GM12878 (cell line): ENCODE measurements at regions of chr14 and their contacts with region 1.

Region 1: DNA sequence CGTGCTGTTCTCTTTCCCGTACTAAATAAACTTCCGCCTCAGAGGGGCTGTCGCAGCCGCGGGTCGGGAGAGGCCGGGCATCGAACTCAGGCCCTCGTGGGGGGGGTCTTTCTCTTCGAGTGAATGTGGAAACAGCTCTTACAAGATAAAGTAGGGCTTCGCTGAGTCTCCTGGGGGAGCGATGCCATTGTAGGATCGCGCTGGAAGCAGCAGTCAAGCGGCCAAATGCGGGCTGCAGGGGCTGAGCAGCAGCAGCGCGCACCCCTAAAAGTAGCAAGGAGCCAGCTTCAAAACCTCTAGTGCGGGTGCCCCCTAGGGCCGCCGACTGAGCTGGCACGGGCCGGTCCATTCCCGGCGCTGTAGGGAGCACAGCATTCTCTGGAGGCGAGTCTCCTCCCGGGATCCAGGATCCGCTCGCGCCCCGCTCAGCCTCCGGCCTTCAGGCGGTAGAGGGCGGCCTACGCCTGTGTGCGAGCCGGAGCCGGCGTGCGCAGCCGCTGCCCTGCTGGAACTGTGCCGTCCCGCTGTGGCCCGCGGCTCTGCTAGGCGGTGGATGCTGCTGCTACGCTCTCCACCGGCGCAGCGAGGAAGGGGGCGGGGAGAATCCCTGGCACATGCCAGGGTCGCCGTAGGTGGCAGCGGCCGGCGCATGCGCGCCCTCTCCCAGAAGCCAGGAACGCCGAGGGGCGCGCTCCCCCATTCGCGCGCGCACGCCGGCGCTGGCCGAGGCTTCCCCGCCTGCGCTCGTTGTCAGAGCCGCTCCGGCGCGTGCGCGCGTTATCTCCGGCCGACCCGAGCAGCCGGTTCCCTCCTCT is at the start of gene FUT8:
- DNase-seq: peak; percentile 80
- ATAC-seq: peak; percentile 89
- H3K4me3 ChIP-seq: peak within 1 kb of the TSS; percentile 97
- H3K27ac ChIP-seq: peak within 1 kb of the TSS; percentile 88
- H3K4me1 ChIP-seq: no peaks in the 10 kb centered on the region
- H3K27me3 ChIP-seq: no peaks in the 10 kb centered on the region
- CTCF ChIP-seq: peak; percentile 51 to 67 (median 61)
- EP300 ChIP-seq: no peak
- POLR2A ChIP-seq: peak; percentile 90
- RAD21 ChIP-seq: peak; percentile 54
- polyA plus RNA-seq, gene FUT8: 25.0 to 45.6 TPM

Region 2: GRCh38 chr14:65164068-65164824 is 248.0 kb before region 1 on chr14:
- CTCF ChIA-PET with region 1: interaction called, 125 read pairs
- POLR2A ChIA-PET with region 1: interaction called, 4 read pairs
- RAD21 ChIA-PET with region 1: interaction called, 42 read pairs
- SMC1A ChIA-PET with region 1: interaction called, 46 read pairs
- in situ Hi-C with region 1: loop called (anchors 5 kb)
- intact Hi-C with region 1: loop called (anchors 1 kb)
- DNase-seq: no peak
- ATAC-seq: peak; percentile 56
- H3K4me3 ChIP-seq: no peak overlapping the region
- H3K27ac ChIP-seq: no peak overlapping the region
- H3K4me1 ChIP-seq: peaks cover 29% of the 10 kb centered on the region
- H3K27me3 ChIP-seq: no peaks in the 10 kb centered on the region
- CTCF ChIP-seq: peak; percentile 51 to 77 (median 62); a peak in 5 of 6 replicates
- EP300 ChIP-seq: no peak
- POLR2A ChIP-seq: no peak
- RAD21 ChIP-seq: peak; percentile 96

Region 3: GRCh38 chr14:65267856-65268255 is 144.4 kb before region 1 on chr14:
- CTCF ChIA-PET with region 1: no interaction called
- POLR2A ChIA-PET with region 1: no interaction called
- RAD21 ChIA-PET with region 1: no interaction called
- SMC1A ChIA-PET with region 1: no interaction called
- in situ Hi-C with region 1: no loop called
- intact Hi-C with region 1: no loop called
- DNase-seq: no peak
- ATAC-seq: no peak
- H3K4me3 ChIP-seq: no peak overlapping the region
- H3K27ac ChIP-seq: no peak overlapping the region
- H3K4me1 ChIP-seq: no peaks in the 10 kb centered on the region
- H3K27me3 ChIP-seq: no peaks in the 10 kb centered on the region
- CTCF ChIP-seq: no peak
- EP300 ChIP-seq: no peak
- POLR2A ChIP-seq: no peak
- RAD21 ChIP-seq: no peak

Region 4: GRCh38 chr14:65287264-65288131 is 124.7 kb before region 1 on chr14:
- CTCF ChIA-PET with region 1: interaction called, 199 read pairs
- POLR2A ChIA-PET with region 1: interaction called, 12 read pairs
- RAD21 ChIA-PET with region 1: interaction called, 209 read pairs
- SMC1A ChIA-PET with region 1: interaction called, 102 read pairs
- in situ Hi-C with region 1: no loop called
- intact Hi-C with region 1: loop called (anchors 1 kb)
- DNase-seq: no peak
- ATAC-seq: peak; percentile 77
- H3K4me3 ChIP-seq: peak overlapping the region; percentile 53
- H3K27ac ChIP-seq: peak overlapping the region; percentile 98
- H3K4me1 ChIP-seq: peaks cover 77% of the 10 kb centered on the region
- H3K27me3 ChIP-seq: no peaks in the 10 kb centered on the region
- CTCF ChIP-seq: peak in 2 of 3 experiments; percentile 2 to 6; a peak in 1 of 6 replicates
- EP300 ChIP-seq: peak; percentile 51 to 55; a peak in 2 of 4 replicates
- POLR2A ChIP-seq: peak; percentile 75
- RAD21 ChIP-seq: no peak; the same call in 1 of the 2 replicates

Region 5: GRCh38 chr14:65428691-65429090 is 16.5 kb after region 1 on chr14:
- CTCF ChIA-PET with region 1: interaction called, 27 read pairs
- POLR2A ChIA-PET with region 1: interaction called, 6 read pairs
- RAD21 ChIA-PET with region 1: interaction called, 22 read pairs
- SMC1A ChIA-PET with region 1: interaction called, 25 read pairs
- in situ Hi-C with region 1: no loop called
- intact Hi-C with region 1: no loop called
- DNase-seq: no peak
- ATAC-seq: no peak
- H3K4me3 ChIP-seq: no peak overlapping the region
- H3K27ac ChIP-seq: no peak overlapping the region
- H3K4me1 ChIP-seq: peaks cover 16% of the 10 kb centered on the region
- H3K27me3 ChIP-seq: no peaks in the 10 kb centered on the region
- CTCF ChIP-seq: no peak
- EP300 ChIP-seq: no peak
- POLR2A ChIP-seq: no peak
- RAD21 ChIP-seq: no peak

Region 6: GRCh38 chr14:65502676-65503124 is 90.5 kb after region 1 on chr14:
- CTCF ChIA-PET with region 1: interaction called, 106 read pairs
- POLR2A ChIA-PET with region 1: interaction called, 9 read pairs
- RAD21 ChIA-PET with region 1: interaction called, 82 read pairs
- SMC1A ChIA-PET with region 1: interaction called, 85 read pairs
- in situ Hi-C with region 1: no loop called
- intact Hi-C with region 1: loop called (anchors 2 kb)
- DNase-seq: peak; percentile 62
- ATAC-seq: peak; percentile 79
- H3K4me3 ChIP-seq: no peak overlapping the region
- H3K27ac ChIP-seq: peak overlapping the region; percentile 65
- H3K4me1 ChIP-seq: peaks cover 21% of the 10 kb centered on the region; the same call in 1 of the 2 replicates
- H3K27me3 ChIP-seq: no peaks in the 10 kb centered on the region
- CTCF ChIP-seq: no peak
- EP300 ChIP-seq: peak; percentile 25 to 45; a peak in 1 of 4 replicates
- POLR2A ChIP-seq: no peak
- RAD21 ChIP-seq: no peak

Region 7: DNA sequence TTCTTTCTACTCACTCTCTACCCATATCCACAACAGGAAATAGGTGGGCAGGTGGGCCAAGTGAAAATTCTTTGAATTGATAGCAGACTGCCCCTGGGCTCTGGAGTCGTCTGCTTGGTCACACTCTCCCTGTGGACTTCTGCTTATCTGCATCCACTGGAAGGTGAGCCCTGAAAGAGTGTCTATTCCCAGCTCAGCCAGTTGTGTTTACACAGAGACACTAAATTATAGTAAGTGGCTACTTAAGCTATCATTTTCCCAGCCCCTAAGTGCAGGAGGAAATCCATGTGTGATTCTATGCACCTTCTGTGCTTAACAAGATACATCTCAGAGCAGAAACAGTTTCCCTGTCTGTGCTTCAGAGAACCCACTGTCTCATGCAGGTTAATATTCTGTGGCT is 338.7 kb after region 1 on chr14:
- CTCF ChIA-PET with region 1: interaction called, 10 read pairs
- POLR2A ChIA-PET with region 1: no interaction called
- RAD21 ChIA-PET with region 1: no interaction called
- SMC1A ChIA-PET with region 1: interaction called, 5 read pairs
- in situ Hi-C with region 1: no loop called
- intact Hi-C with region 1: no loop called
- DNase-seq: no peak
- ATAC-seq: no peak
- H3K4me3 ChIP-seq: no peak overlapping the region
- H3K27ac ChIP-seq: no peak overlapping the region
- H3K4me1 ChIP-seq: no peaks in the 10 kb centered on the region
- H3K27me3 ChIP-seq: no peaks in the 10 kb centered on the region
- CTCF ChIP-seq: no peak
- EP300 ChIP-seq: no peak
- POLR2A ChIP-seq: no peak
- RAD21 ChIP-seq: no peak

Region 8: DNA sequence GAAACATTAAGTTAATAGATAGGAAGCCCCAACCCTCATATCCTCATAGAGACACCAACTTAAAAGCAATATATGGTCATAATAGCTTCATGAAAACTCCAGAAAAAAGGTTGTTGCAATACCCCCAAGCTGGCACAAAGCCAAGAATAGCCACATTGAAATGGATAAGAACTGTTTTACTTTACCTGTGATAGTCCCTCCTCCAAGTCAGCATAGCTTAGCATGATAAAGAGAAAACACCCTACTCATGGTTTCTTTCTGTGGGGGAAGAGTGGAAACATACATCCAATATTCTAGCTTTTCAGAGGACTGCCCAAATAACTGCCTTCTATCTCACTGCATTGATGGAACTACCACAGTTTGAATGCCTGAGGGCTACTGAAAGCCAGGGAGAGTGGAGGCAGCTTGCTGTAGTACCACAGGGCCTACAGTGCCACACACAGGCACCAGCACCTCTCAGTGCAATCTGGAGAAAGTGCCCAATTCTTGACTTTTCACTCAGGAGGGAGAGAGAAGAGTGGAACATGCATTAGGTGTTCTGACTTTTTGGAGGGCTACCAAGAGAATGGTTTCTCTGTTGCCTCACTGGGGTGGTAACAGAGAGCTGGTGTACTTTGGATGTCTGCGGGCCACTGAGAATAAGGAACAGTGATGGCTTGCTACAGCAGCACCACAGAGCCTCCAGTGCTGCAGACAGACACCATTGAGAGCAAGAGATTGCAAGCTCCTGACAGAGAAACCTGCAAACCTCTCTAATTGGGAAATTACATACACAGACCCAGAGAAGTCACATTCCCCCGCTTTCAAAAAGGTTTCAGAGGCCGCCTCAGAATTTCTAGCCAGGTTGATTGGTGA is 1619.9 kb after region 1 on chr14:
- CTCF ChIA-PET with region 1: no interaction called
- POLR2A ChIA-PET with region 1: no interaction called
- RAD21 ChIA-PET with region 1: no interaction called
- SMC1A ChIA-PET with region 1: no interaction called
- in situ Hi-C with region 1: no loop called
- intact Hi-C with region 1: no loop called
- DNase-seq: no peak
- ATAC-seq: no peak
- H3K4me3 ChIP-seq: no peak overlapping the region
- H3K27ac ChIP-seq: no peak overlapping the region
- H3K4me1 ChIP-seq: no peaks in the 10 kb centered on the region
- H3K27me3 ChIP-seq: no peaks in the 10 kb centered on the region
- CTCF ChIP-seq: no peak
- EP300 ChIP-seq: no peak
- POLR2A ChIP-seq: no peak
- RAD21 ChIP-seq: no peak